ENCODE measurements at regions of chr1 and their contacts with region 1.

Region 1: DNA sequence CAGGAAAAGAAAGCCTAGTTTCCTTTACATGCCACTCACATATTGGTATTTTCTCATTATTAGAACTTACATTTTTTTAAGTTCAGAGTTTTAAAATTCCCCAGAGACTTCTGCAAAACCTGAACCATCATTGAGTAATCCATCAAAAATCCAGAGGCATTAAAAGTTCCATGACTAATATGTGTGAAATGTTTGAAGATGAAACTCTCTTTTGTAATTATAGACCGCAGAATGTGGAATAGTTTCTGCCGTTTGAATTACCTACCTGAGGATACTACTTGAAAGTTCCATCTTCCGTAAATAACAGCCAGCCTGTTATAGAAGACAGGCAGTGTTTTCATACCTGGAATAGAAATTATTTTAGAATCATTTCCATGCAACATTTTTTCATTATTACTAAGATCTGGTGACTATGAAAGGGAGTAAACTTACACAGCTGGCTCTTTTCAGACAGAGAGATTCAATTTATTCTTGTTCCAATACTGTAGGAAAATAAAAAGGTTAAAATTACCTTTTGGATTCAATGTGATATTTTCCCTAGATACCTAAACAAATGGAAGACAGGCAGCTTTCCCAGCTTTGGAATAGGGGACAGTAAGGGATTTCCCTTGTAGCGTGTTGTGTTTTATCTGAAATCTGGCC is 131.4 kb downstream of the ST6GALNAC5 start:
- DNase-seq: peak; percentile 95
- H3K4me3 ChIP-seq: peak overlapping the region in 2 of 3 experiments; percentile 14 to 20
- H3K27ac ChIP-seq: peak overlapping the region; percentile 100
- H3K4me1 ChIP-seq: peaks cover 28% of the 10 kb centered on the region
- H3K27me3 ChIP-seq: no peaks in the 10 kb centered on the region
- CTCF ChIP-seq: no peak

Region 2: GRCh38 chr1:76668046-76668445 is 330.7 kb before region 1 on chr1:
- CTCF ChIA-PET with region 1: no interaction called
- dilution Hi-C with region 1: no loop called
- in situ Hi-C with region 1: no loop called
- intact Hi-C with region 1: no loop called
- DNase-seq: no peak
- H3K4me3 ChIP-seq: no peak overlapping the region
- H3K27ac ChIP-seq: no peak overlapping the region
- H3K4me1 ChIP-seq: no peaks in the 10 kb centered on the region
- H3K27me3 ChIP-seq: no peaks in the 10 kb centered on the region
- CTCF ChIP-seq: no peak

Region 3: GRCh38 chr1:76928522-76928921 is 70.2 kb before region 1 on chr1:
- CTCF ChIA-PET with region 1: no interaction called
- dilution Hi-C with region 1: no loop called
- in situ Hi-C with region 1: no loop called
- intact Hi-C with region 1: loop called (anchors 2 kb)
- DNase-seq: peak; percentile 58
- H3K4me3 ChIP-seq: no peak overlapping the region
- H3K27ac ChIP-seq: no peak overlapping the region
- H3K4me1 ChIP-seq: peaks cover 10% of the 10 kb centered on the region
- H3K27me3 ChIP-seq: no peaks in the 10 kb centered on the region
- CTCF ChIP-seq: no peak

Region 4: GRCh38 chr1:76949503-76949902 is 49.2 kb before region 1 on chr1:
- CTCF ChIA-PET with region 1: no interaction called
- dilution Hi-C with region 1: no loop called
- in situ Hi-C with region 1: no loop called
- intact Hi-C with region 1: loop called (anchors 2 kb)
- DNase-seq: peak; percentile 78
- H3K4me3 ChIP-seq: no peak overlapping the region
- H3K27ac ChIP-seq: peak overlapping the region; percentile 7
- H3K4me1 ChIP-seq: peaks cover 24% of the 10 kb centered on the region
- H3K27me3 ChIP-seq: no peaks in the 10 kb centered on the region
- CTCF ChIP-seq: no peak

Region 5: GRCh38 chr1:77039739-77040138 is 41.0 kb after region 1 on chr1:
- CTCF ChIA-PET with region 1: no interaction called
- dilution Hi-C with region 1: no loop called
- in situ Hi-C with region 1: no loop called
- intact Hi-C with region 1: loop called (anchors 1 kb)
- DNase-seq: peak; percentile 95
- H3K4me3 ChIP-seq: no peak overlapping the region
- H3K27ac ChIP-seq: peak overlapping the region; percentile 46
- H3K4me1 ChIP-seq: peaks cover 34% of the 10 kb centered on the region
- H3K27me3 ChIP-seq: no peaks in the 10 kb centered on the region
- CTCF ChIP-seq: no peak